ENCODE measurements at regions of chr17 and their contacts with region 1.

Region 1: DNA sequence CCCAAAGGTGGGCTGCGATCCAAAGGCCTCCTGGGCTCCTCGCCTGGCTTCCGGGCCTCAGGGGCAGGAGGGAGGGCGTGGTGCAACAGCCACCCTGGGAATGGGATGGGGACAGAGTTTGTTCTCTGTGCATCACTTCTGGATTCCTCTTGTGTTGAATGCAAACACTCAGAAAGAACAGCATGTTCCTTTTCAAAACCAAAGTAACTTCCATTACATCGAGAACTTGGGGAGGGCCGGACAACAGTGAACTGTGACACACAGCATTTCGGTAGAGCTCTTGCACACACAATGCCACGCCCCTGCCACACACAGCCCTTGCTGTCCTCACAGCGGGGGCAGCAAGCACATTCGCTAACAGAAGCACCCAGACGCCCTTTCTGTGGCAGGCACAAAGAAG is 36.1 kb upstream of the FASN start:
- DNase-seq: peak; percentile 29
- H3K4me3 ChIP-seq: no peak overlapping the region
- H3K27ac ChIP-seq: peak overlapping the region; percentile 64
- H3K4me1 ChIP-seq: peaks cover 12% of the 10 kb centered on the region
- H3K27me3 ChIP-seq: no peaks in the 10 kb centered on the region
- CTCF ChIP-seq: no peak

Region 2: GRCh38 chr17:81890447-81891299 is 243.4 kb before region 1 on chr17:
- CTCF ChIA-PET with region 1: no interaction called
- dilution Hi-C with region 1: loop called (anchors 10 kb)
- in situ Hi-C with region 1: no loop called
- intact Hi-C with region 1: no loop called
- DNase-seq: no peak
- H3K4me3 ChIP-seq: peak overlapping the region; percentile 80 to 88 (median 87)
- H3K27ac ChIP-seq: peak overlapping the region; percentile 77
- H3K4me1 ChIP-seq: peaks cover 21% of the 10 kb centered on the region
- H3K27me3 ChIP-seq: no peaks in the 10 kb centered on the region
- CTCF ChIP-seq: no peak

Region 3: DNA sequence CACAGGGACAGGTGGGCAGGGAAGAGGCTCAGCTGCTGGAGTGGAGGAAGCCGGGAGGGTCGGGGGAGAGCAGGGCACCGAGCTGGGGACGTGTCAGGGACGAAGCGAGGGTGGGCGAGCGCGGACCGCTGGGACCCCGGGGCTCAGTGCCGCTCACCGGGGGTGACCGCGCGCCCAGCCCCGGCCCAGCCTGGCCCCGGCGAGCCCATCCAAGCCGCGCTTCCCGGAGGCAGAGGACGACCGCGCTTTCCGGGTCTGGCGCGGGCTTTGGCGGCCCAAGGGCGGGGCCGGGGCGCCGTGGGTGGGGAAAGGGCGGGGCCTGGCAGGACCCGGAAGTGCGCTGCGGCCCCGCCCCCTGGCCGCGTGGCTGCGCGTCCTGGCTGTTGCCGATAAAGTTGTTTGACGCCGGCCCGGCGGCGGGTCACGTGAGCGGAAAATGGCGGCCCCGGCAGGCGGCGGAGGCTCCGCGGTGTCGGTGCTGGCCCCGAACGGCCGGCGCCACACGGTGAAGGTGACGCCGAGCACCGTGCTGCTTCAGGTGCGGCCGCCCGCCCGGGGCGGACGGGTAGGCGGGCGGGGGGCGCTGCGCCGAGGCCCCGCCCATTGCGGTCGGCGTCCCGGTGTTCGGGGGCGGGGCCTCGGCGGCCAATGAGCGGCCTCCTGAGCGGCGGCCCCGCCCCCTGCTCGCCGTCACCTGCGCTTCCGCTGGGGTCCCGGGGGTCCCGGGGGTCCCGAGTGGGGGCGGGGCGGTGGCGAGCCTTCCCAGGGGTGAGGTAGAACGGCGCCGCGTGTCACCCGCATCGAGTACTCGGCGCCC is 156.7 kb before region 1 on chr17 and contains the start of gene ASPSCR1:
- CTCF ChIA-PET with region 1: no interaction called
- dilution Hi-C with region 1: loop called (anchors 10 kb)
- in situ Hi-C with region 1: no loop called
- intact Hi-C with region 1: no loop called
- DNase-seq: peak; percentile 84
- H3K4me3 ChIP-seq: peak within 1 kb of the TSS; percentile 66 to 98 (median 73)
- H3K27ac ChIP-seq: peak within 1 kb of the TSS; percentile 80
- H3K4me1 ChIP-seq: peaks cover 16% of the 10 kb centered on the region
- H3K27me3 ChIP-seq: no peaks in the 10 kb centered on the region
- CTCF ChIP-seq: no peak
- total RNA-seq, gene ASPSCR1: 13.3 to 21.3 TPM

Region 4: GRCh38 chr17:82175951-82176350 is 41.9 kb after region 1 on chr17:
- CTCF ChIA-PET with region 1: no interaction called
- dilution Hi-C with region 1: loop called (anchors 5 kb)
- in situ Hi-C with region 1: no loop called
- intact Hi-C with region 1: no loop called
- DNase-seq: no peak
- H3K4me3 ChIP-seq: no peak overlapping the region
- H3K27ac ChIP-seq: no peak overlapping the region
- H3K4me1 ChIP-seq: no peaks in the 10 kb centered on the region
- H3K27me3 ChIP-seq: no peaks in the 10 kb centered on the region
- CTCF ChIP-seq: no peak

Region 5: GRCh38 chr17:82367724-82368524 is 233.8 kb after region 1 on chr17:
- CTCF ChIA-PET with region 1: no interaction called
- dilution Hi-C with region 1: loop called (anchors 10 kb)
- in situ Hi-C with region 1: no loop called
- intact Hi-C with region 1: no loop called
- DNase-seq: no peak
- H3K4me3 ChIP-seq: no peak overlapping the region
- H3K27ac ChIP-seq: no peak overlapping the region
- H3K4me1 ChIP-seq: peaks cover 7% of the 10 kb centered on the region
- H3K27me3 ChIP-seq: peaks cover 26% of the 10 kb centered on the region
- CTCF ChIP-seq: no peak

Measured in mammary epithelial cell (primary cell).